Right ventricle myocardium inferior (tissue), 1 donor: ENCODE measurements at regions of chr10 and their contacts with region 1.

Region 1: DNA sequence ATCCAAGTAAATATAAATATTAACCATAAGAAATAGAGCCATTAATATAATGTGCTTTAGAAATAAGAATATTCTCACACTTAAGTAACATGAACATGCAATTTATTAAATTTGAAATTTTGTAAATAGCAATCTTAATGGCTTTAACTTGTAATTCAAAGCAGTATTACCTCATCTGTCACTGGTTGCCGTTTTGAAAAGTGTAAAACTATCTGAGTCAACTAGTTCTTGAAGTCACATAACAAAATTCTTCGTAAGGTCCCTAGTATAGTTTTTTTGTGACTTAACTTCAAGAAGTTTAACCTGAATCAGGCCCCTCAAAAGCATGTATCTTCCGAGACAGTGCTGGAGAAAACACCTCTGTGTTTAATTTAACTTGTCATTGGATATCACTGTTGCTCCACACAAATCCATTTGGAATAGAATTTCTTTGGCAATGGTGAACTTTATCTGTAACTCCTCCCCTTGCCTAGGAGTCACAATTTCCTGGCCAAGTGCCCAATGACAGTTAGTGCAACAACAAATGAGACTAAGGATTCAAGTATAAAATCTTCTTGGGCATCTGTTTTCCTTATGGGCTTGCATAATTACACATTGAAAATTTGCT is 47.1 kb downstream of the NT5C2 start:
- DNase-seq: no peak
- ATAC-seq: peak; percentile 82

Region 2: GRCh38 chr10:103111031-103111917 is 34.7 kb before region 1 on chr10:
- intact Hi-C with region 1: loop called (anchors 5 kb)
- DNase-seq: no peak
- ATAC-seq: peak; percentile 94